Common myeloid progenitor, CD34-positive (primary cell): ENCODE measurements at regions of chr2 and their contacts with region 1.

Region 1: GRCh38 chr2:219206442-219207253 is at the start of gene ZFAND2B:
- DNase-seq: peak; percentile 94 to 98 (median 97)
- H3K4me3 ChIP-seq: peak within 1 kb of the TSS; percentile 38 to 90 (median 78)
- H3K27ac ChIP-seq: peak within 1 kb of the TSS; percentile 46 to 89
- H3K4me1 ChIP-seq: peaks cover 23 to 52% (median 51%) of the 10 kb centered on the region in 4 experiments
- H3K27me3 ChIP-seq: no peaks in the 10 kb centered on the region

Region 2: DNA sequence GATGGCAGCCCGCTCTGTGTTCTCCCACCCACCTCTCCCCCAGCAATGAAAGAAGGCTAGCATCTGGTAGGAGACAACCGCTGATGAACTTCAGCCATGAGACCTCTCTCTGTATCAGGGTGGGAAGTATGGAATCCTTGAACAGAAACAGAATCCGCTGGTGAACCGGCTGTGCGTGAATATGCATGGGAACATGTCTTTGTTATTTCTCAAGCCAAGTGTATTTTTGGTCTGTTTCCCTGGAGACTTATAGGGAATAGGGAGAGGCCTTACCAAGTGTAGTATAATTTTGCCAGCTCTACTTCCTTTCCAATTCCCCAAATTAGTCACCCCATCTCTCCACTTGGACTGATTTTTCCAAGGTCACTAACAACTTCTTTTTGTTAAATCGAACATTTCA is 295.9 kb before region 1 on chr2:
- CTCF ChIA-PET with region 1: no interaction called
- POLR2A ChIA-PET with region 1: no interaction called
- DNase-seq: no peak
- H3K4me3 ChIP-seq: no peak overlapping the region
- H3K27ac ChIP-seq: no peak overlapping the region
- H3K4me1 ChIP-seq: peaks cover 0 to 15% (median 9%) of the 10 kb centered on the region in 4 experiments
- H3K27me3 ChIP-seq: peaks cover 9 to 18% (median 14%) of the 10 kb centered on the region in 5 experiments

Region 3: DNA sequence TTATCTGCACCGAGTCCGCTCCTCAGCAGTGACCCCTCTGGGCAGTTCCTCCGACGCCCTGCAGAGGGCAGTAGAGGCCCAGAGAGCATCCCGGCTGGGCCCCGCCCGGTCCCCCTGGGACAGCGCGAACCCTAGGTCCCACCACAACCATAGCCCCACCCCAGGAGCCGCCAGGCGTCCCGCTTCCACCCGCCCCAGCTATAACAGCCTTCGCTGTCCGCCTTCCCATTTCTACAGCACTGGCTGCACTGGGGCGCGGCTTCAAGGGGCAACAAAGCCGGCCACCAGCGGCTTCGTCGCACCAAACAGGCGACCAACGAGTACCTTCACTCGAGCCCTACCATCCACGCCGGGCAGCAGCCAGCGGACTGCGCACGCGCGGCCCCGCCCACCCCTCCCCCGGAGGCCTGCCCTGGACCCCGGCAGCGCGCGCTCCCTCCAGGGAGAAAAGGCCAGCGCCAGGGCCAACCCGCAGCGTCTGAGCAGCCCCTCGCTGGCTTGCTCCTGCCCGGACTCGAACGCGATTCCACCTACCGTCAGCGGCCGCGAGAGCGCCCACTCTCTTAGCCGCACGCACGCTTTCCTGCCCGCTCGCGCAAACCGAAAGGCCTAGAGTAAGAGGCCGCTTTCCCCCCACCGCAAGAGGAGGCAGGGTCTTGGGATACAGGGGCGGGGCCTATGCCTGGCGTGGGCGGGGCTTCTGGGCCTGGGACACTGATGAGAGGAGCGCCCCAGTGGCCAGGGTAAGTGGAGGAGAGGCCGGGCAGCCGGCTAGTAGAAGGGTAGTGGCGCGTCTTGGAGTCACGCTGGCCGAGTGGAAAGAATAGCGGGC is 46.2 kb before region 1 on chr2 and contains the start of gene NHEJ1:
- CTCF ChIA-PET with region 1: interaction called, 120 read pairs
- POLR2A ChIA-PET with region 1: no interaction called
- DNase-seq: peak; percentile 90 to 94 (median 94)
- H3K4me3 ChIP-seq: peak within 1 kb of the TSS; percentile 52 to 84 (median 78)
- H3K27ac ChIP-seq: peak within 1 kb of the TSS in 1 of 2 experiments; percentile 73
- H3K4me1 ChIP-seq: peaks cover 0 to 14% (median 13%) of the 10 kb centered on the region in 4 experiments
- H3K27me3 ChIP-seq: no peaks in the 10 kb centered on the region

Region 4: DNA sequence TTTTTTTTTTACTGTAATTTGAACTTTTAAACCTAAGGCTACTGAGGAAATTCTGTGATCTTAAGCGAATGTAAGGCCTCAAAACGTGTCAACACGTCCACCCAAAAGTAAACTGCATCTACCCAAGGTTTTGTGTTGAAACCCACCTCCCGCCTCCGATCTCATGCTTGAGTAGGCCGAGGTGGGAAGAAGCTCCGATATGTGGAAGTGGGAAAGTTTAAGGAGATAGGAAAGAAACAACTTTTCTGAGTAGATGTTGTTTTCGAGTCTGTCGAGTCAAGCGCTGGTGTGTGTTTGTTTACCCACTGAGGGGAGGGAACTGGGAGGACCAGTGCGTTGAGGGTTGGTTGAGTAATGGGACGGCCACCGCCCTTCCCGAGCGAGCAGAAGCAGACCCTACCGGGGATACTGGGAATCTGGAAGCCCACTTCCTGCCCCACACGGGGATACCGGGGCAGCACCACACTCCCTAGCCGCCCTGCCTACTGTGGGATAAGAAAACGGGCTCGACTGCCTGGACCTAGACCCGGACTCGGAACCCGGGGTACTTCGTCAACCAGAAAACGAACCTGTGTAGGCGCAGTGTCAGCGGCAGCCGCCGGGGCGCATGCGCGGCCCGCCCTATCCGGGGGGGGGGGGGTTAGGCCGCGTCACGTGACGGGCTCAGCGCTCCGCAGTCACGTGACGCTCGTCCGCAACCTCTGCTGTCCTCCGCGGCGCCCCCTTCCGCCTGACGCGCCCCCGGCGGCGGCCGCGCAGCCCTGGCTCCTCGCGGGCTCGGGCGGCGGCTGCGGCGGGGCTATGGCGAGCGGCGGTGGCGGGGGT is 28.9 kb before region 1 on chr2 and contains the start of gene RETREG2:
- CTCF ChIA-PET with region 1: interaction called, 238 read pairs
- POLR2A ChIA-PET with region 1: interaction called, 4 read pairs
- DNase-seq: peak; percentile 92 to 95 (median 95)
- H3K4me3 ChIP-seq: peak within 1 kb of the TSS; percentile 74 to 95 (median 75)
- H3K27ac ChIP-seq: peak within 1 kb of the TSS; percentile 62 to 94
- H3K4me1 ChIP-seq: peaks cover 12 to 65% (median 50%) of the 10 kb centered on the region in 4 experiments
- H3K27me3 ChIP-seq: no peaks in the 10 kb centered on the region

Region 5: DNA sequence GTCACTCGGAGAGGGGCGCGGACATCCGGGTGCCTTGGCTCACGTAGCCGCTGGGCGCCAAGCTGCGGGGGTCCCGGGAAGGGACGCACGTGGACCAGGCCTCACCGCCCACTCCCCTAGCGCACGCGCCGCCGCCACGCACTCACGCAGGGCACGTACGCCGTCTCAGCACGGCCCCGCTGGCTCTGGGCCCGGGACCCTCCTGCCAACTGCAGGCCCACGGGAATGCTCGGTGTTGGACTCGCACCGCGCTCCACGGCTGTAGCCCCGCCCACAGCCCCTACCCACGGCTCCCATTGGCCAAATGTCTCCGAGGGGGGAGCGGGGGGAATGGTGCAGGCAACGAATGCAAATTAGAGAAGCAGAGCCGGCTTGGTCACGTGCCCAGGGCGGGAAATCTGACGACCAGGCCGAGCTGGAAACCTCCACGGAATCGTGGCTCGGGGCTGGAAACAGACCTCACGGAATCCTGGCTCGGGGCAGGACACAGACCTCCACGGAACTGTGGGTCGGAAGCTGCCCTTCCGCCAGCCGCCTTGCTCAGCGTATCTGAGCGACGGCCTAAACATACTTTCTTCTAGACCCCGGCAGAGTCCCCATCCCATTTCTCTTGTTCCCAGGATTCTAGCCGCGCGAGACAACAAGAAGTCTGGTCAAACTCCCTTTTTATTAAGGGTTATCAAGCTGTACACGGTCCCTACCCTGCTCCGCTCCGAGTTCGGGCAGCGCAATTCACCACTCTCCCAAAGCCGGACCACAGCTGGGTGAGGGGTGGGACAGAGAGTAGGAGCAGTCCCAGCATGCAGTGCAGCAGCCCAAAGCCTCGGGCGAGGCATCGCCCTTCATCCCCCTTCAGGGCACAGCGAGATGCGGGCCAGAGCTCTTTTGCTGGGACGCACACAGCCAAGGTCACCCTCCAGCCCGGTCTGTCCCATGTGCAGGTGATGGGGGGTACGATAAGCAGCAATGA is 12.4 kb after region 1 on chr2 and contains the start of gene ABCB6:
- CTCF ChIA-PET with region 1: interaction called, 12 read pairs
- POLR2A ChIA-PET with region 1: no interaction called
- DNase-seq: peak; percentile 84 to 92 (median 92)
- H3K4me3 ChIP-seq: peak within 1 kb of the TSS in 6 of 7 experiments; percentile 18 to 77 (median 62)
- H3K27ac ChIP-seq: peak within 1 kb of the TSS in 1 of 2 experiments; percentile 25
- H3K4me1 ChIP-seq: peaks cover 0 to 37% (median 27%) of the 10 kb centered on the region in 4 experiments
- H3K27me3 ChIP-seq: no peaks in the 10 kb centered on the region